Dorsolateral prefrontal cortex (tissue), 120 donors: ENCODE measurements at regions of chr2 and their contacts with region 1.

Region 1: GRCh38 chr2:172102391-172103278 is at the start of gene DLX2:
- DNase-seq: peak; percentile 53 to 84 (median 78)
- H3K4me3 ChIP-seq: peak within 1 kb of the TSS; percentile 26 to 72 (median 52)
- H3K27ac ChIP-seq: peak within 1 kb of the TSS in 14 of 59 donors; percentile 4 to 57 (median 34)
- H3K27me3 ChIP-seq: peaks cover 33 to 100% (median 100%) of the 10 kb centered on the region in 45 donors
- CTCF ChIP-seq: no peak
- total RNA-seq, gene DLX2: 0.39 to 4.2 (median 1.8) TPM

Region 2: GRCh38 chr2:171574149-171574795 is 528.4 kb before region 1 on chr2:
- intact Hi-C with region 1: loop called in 1 of 2 experiments (anchors 10 kb)
- DNase-seq: peak; percentile 35 to 80 (median 64)
- H3K4me3 ChIP-seq: peak overlapping the region in 23 of 59 donors; percentile 3 to 44 (median 28)
- H3K27ac ChIP-seq: peak overlapping the region in 1 of 59 donors; percentile 12
- H3K27me3 ChIP-seq: peaks cover 0 to 5% (median 0%) of the 10 kb centered on the region in 45 donors
- CTCF ChIP-seq: peak; percentile 65 to 99 (median 95)

Region 3: GRCh38 chr2:171811245-171811628 is 291.4 kb before region 1 on chr2:
- intact Hi-C with region 1: loop called in 1 of 2 experiments (anchors 5 kb)
- DNase-seq: no peak
- H3K4me3 ChIP-seq: no peak overlapping the region
- H3K27ac ChIP-seq: no peak overlapping the region
- H3K27me3 ChIP-seq: no peaks in the 10 kb centered on the region
- CTCF ChIP-seq: peak in 43 of 56 donors; percentile 10 to 67 (median 37)

Region 4: DNA sequence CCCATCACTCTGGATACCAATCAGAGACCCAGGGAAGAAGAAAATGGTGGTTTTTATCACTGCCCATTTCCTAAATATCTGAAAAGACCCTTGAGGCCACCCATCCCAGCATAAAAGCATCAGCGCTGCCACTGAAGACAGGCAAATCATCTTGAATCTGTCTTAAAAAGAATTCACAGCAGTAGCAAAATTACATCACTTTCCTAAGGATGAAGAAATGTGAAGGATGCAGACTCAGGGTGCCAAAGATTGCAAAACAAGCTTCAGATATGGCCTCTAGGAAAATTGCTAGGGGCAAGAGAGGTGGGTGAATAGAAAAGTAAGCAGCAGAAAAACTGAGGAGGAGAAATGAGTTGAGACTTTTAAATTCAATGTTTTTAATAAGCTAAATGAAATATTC is 278.5 kb before region 1 on chr2:
- intact Hi-C with region 1: no loop called
- DNase-seq: no peak
- H3K4me3 ChIP-seq: no peak overlapping the region
- H3K27ac ChIP-seq: no peak overlapping the region
- H3K27me3 ChIP-seq: no peaks in the 10 kb centered on the region
- CTCF ChIP-seq: no peak

Region 5: GRCh38 chr2:172226244-172227061 is 123.8 kb after region 1 on chr2:
- intact Hi-C with region 1: no loop called
- DNase-seq: no peak
- H3K4me3 ChIP-seq: no peak overlapping the region
- H3K27ac ChIP-seq: no peak overlapping the region
- H3K27me3 ChIP-seq: peaks cover 0 to 3% (median 0%) of the 10 kb centered on the region in 45 donors
- CTCF ChIP-seq: no peak